ENCODE measurements at regions of chr14 and their contacts with region 1.

Region 1: DNA sequence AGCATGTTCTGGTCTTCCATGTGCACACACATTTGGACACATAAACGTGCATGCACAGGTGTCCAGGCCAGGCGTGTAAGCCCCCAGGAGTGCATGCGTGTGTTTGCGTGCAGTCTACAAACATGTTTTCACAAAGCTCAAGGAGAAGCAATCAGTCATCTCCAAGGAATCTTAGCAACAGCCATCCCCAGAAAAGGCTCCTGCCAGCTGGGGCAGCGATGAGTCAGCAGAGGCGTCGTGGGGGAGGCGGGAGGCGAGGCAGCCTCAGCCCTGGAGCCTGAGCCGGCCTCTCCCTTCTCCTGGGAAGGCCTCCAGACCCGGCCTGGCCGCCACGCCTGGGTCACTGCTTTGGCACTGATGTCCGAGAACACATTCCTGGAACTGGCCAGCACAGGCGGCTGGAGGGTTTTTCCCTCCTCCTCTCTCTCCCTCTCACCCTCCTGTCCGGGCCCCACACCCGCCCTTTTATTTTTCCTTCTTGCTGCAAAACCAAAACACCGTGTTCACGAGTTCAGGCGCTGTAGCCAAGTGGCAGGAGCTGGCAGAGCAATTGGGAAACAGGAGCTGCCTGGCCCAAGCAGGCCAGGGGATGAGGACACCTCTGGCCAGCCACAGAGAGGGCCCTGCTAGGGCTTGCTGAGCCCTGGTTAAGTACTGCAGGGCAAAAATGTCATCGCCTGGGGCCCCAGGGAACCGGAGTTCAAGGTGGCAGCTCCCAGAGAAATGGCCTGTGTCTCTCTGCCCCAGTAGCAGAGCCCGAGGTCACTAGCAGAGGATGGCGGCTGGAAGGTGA is 92.7 kb downstream of the LRRC74A start:
- DNase-seq: peak; percentile 66 to 94 (median 88)
- H3K4me3 ChIP-seq: peak overlapping the region in 18 of 59 donors; percentile 1 to 33 (median 14)
- H3K27ac ChIP-seq: peak overlapping the region; percentile 32 to 97 (median 89)
- H3K27me3 ChIP-seq: no peaks in the 10 kb centered on the region
- CTCF ChIP-seq: peak in 20 of 56 donors; percentile 5 to 42 (median 21)

Region 2: GRCh38 chr14:76947078-76947837 is 28.3 kb after region 1 on chr14:
- intact Hi-C with region 1: loop called in 1 of 2 experiments (anchors 2 kb)
- DNase-seq: peak; percentile 88 to 96 (median 94)
- H3K4me3 ChIP-seq: peak overlapping the region in 48 of 59 donors; percentile 0 to 46 (median 32)
- H3K27ac ChIP-seq: peak overlapping the region; percentile 27 to 94 (median 87)
- H3K27me3 ChIP-seq: no peaks in the 10 kb centered on the region
- CTCF ChIP-seq: peak in 55 of 56 donors; percentile 39 to 88 (median 72)

Region 3: DNA sequence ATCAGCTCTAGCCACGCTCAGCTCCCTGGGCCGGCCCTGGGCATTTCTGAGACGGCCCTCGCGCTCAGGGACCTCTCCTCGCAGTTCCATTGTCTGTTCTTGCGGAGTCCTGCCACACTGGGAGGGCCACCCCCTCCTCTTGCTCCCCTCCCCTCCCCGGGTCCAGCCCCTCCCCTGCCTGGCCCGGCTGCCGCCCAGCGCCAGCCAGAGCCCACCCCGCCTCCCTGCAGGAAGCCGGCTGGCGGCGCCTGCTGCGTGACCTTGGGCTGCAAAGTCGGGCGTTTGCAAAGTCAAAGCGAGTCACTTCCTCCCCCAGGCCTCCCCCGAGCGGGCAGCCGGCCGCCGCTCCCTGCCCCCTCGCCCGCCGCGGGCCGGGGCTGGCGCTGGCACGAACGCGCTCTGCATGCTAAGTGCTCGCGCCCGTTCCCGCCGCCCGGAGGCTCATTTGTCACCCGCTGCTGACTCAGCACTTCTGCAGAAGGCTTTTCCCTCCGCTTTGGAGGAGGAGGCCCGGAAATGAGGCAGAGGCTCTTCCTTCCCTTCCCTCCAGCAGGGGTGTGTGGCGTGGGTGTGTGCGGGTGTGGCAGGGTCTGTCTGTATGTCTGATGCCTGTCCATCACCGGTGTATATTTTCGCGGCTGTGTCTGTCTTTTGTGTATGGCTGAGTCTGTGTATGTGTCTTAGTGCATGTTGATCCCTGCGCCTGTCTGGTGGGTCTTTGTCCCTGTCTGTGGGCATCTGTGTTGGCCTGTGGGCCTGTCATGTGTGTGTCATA is 37.6 kb after region 1 on chr14:
- intact Hi-C with region 1: loop called (anchors 5 kb)
- DNase-seq: peak; percentile 80 to 95 (median 91)
- H3K4me3 ChIP-seq: peak overlapping the region; percentile 27 to 70 (median 52)
- H3K27ac ChIP-seq: peak overlapping the region; percentile 78 to 99 (median 97)
- H3K27me3 ChIP-seq: no peaks in the 10 kb centered on the region
- CTCF ChIP-seq: peak in 34 of 56 donors; percentile 10 to 53 (median 31)

Region 4: DNA sequence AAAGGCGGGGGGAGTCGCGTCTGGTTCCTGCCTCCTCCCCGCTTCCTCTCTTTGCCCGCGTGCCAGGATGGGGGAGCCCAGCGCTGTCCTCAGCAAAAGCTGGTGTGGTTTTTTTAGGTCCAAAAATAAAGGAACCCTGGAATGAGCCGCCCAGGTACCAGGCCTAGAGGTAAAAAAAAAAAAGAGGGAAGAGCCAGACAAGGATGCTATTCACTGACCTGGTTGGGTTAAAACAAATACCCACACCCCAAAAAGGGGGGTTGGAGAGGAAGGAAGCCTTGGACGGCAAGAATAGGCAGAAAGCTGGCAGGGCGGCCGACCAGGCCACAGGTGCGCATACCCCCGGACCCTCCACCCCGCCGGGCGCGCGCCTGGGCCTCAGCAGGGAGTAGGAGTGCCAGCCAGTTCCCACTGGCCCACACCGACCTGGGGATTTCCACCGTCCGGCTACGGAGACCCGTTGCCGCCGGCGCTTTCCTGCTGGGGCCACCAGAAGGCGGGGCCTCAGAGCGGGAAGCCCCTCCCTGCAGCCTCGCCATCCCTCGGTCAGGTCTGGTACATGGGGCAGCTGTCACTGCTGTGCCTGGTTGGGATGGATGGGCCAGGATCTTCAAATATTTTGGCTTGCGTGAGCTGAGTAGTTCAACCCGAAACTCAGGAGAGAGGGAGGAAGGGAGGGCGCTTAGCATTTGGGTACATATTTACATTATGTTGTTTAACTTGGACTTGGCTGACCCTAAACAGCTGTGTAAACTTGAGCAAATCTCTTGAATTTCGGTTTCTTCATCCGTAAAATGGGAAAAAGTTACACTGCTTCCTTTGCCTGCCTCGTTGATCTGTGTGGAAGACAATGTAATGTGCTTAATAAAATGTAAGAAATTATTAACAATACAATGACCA is 114.9 kb after region 1 on chr14:
- intact Hi-C with region 1: loop called in 1 of 2 experiments (anchors 2 kb)
- DNase-seq: peak in 7 of 10 donors; percentile 60 to 84 (median 70)
- H3K4me3 ChIP-seq: peak overlapping the region; percentile 27 to 82 (median 59)
- H3K27ac ChIP-seq: peak overlapping the region; percentile 71 to 100 (median 97)
- H3K27me3 ChIP-seq: no peaks in the 10 kb centered on the region
- CTCF ChIP-seq: peak in 2 of 56 donors; percentile 8 to 10

Region 5: DNA sequence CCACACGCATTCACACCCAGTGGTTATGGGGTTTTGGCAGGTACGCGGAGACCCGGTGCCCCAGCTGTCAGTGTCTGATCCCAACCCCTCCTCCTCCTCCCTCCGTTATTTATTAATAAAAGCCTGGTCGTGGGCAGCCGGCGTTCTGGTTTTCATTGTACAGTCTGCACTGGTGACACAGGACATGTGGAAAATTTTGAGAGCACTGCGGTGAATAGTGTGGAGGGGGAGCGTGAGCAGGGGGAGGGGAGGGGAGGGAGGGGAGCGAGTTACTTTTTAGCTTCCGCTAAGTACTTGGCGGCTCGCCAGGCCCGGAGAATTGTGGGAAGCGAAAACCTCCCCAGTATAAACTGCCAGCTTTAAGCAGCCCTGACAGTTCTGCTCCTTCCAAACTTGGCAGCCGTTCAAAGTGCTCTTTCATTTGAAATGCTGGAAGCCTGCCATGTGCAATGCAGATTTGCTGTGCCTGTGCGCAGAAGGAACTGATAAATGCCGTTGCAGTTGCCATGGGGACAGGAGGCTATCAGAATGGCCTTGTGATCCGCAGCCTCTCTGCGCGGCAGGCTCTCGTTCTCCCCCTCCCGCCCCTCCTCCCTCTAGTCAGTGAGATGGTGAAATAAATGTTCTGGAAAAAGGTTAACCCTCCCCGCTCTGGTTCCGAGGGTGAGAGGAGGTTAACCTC is 121.3 kb after region 1 on chr14:
- intact Hi-C with region 1: loop called in 1 of 2 experiments (anchors 1 kb)
- DNase-seq: peak; percentile 93 to 99 (median 96)
- H3K4me3 ChIP-seq: peak overlapping the region in 58 of 59 donors; percentile 4 to 63 (median 44)
- H3K27ac ChIP-seq: peak overlapping the region; percentile 82 to 100 (median 98)
- H3K27me3 ChIP-seq: no peaks in the 10 kb centered on the region
- CTCF ChIP-seq: peak in 12 of 56 donors; percentile 15 to 38 (median 23)